Caco-2 (cell line): ENCODE measurements at regions of chr3 and their contacts with region 1.

Region 1: GRCh38 chr3:55620351-55621025 is 133.4 kb upstream of the WNT5A start:
- DNase-seq: peak; percentile 47 to 67
- H3K4me3 ChIP-seq: no peak overlapping the region
- H3K4me3 Mint-ChIP-seq: peak overlapping the region; percentile 68
- H3K27ac Mint-ChIP-seq: peak overlapping the region; percentile 89
- H3K4me1 ChIP-seq: peaks cover 47% of the 10 kb centered on the region
- H3K4me1 Mint-ChIP-seq: peaks cover 37% of the 10 kb centered on the region
- H3K27me3 ChIP-seq: no peaks in the 10 kb centered on the region
- H3K27me3 Mint-ChIP-seq: no peaks in the 10 kb centered on the region
- CTCF ChIP-seq: no peak

Region 2: DNA sequence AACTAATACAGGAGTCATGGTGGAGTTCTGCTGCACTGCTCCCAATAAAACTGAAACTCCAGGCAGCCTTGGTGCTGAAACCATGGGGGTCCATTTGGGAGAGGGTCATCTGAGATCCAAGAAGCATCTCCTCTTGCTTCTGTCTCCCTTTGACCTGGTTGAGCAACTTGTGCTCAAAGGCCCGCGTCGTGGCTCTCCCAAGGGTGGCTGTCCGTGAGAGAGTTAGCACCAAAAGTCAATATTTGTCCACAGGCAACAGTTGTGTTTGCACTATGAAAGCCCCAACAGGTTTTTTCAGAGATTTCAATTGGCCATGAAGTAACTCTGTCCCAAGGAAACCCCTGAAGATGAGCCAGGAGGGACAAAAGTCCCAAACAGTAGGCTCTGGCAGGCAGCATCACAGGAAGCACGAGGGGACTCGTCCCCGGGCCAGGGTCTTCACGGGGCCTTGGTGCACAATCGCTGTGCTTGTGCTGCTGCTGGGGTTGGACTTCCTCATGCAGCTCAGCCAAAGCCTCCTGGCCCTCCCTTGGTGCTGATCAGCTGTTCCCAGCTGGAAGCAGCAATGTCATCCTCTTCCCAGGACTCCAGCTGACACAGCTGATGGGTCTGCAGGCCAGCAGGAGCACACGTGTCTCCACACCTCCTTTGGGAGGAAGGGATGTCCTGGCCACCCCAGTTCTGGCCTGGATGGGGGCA is 94.0 kb before region 1 on chr3:
- CTCF ChIA-PET with region 1: no interaction called
- POLR2A ChIA-PET with region 1: no interaction called
- intact Hi-C with region 1: loop called (anchors 2 kb)
- DNase-seq: peak; percentile 73 to 78
- H3K4me3 ChIP-seq: no peak overlapping the region
- H3K4me3 Mint-ChIP-seq: no peak overlapping the region
- H3K27ac Mint-ChIP-seq: no peak overlapping the region
- H3K4me1 ChIP-seq: peaks cover 26% of the 10 kb centered on the region
- H3K4me1 Mint-ChIP-seq: peaks cover 23% of the 10 kb centered on the region
- H3K27me3 ChIP-seq: no peaks in the 10 kb centered on the region
- H3K27me3 Mint-ChIP-seq: no peaks in the 10 kb centered on the region
- CTCF ChIP-seq: no peak

Region 3: DNA sequence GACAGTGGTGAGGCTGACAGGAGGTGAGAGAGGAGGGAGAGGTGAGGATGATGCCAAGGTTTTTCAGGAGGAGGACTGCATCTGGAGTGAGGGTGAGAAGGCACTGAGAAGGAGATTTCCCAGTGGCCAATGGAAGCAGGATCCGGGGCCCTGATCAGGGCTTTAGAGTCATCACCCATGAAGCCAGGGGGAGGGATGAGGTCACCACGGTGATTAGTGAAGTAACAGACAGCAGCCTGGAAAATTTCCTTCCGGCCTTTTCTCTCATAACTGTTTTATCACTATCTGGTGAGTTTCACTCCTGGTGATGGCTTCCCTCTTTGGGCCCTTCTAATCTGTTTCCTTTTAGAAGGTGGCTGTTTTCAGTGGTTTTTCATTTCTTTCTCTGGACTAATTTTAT is 52.9 kb before region 1 on chr3:
- CTCF ChIA-PET with region 1: no interaction called
- POLR2A ChIA-PET with region 1: no interaction called
- intact Hi-C with region 1: loop called (anchors 1 kb)
- DNase-seq: no peak
- H3K4me3 ChIP-seq: no peak overlapping the region
- H3K4me3 Mint-ChIP-seq: no peak overlapping the region
- H3K27ac Mint-ChIP-seq: peak overlapping the region; percentile 3
- H3K4me1 ChIP-seq: peaks cover 32% of the 10 kb centered on the region
- H3K4me1 Mint-ChIP-seq: peaks cover 10% of the 10 kb centered on the region
- H3K27me3 ChIP-seq: no peaks in the 10 kb centered on the region
- H3K27me3 Mint-ChIP-seq: no peaks in the 10 kb centered on the region
- CTCF ChIP-seq: no peak

Region 4: DNA sequence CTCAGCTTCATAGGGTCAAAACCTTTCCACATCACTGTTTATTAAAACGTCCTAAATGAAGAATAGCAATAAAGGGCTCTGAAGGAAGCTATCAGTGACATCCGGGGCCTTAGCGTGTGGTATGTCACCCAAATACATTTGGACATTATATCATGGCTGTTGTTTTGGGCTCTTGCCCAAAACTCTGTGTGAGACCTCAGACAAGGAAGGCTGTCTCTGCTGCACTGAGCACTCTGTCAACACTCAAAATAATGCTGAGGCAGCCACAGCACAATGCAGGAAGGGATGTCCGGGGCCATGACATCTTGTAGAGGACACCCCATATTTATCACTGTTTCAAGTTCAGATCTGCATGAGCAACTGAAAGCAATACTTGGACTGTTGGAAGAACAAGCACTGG is 160.4 kb after region 1 on chr3:
- CTCF ChIA-PET with region 1: no interaction called
- POLR2A ChIA-PET with region 1: no interaction called
- intact Hi-C with region 1: no loop called
- DNase-seq: no peak
- H3K4me3 ChIP-seq: no peak overlapping the region
- H3K4me3 Mint-ChIP-seq: no peak overlapping the region
- H3K27ac Mint-ChIP-seq: no peak overlapping the region
- H3K4me1 ChIP-seq: no peaks in the 10 kb centered on the region
- H3K4me1 Mint-ChIP-seq: no peaks in the 10 kb centered on the region
- H3K27me3 ChIP-seq: no peaks in the 10 kb centered on the region
- H3K27me3 Mint-ChIP-seq: peaks cover 20% of the 10 kb centered on the region
- CTCF ChIP-seq: no peak